Head of caudate nucleus (tissue), 42 donors: ENCODE measurements at regions of chr19 and their contacts with region 1.

Region 1: DNA sequence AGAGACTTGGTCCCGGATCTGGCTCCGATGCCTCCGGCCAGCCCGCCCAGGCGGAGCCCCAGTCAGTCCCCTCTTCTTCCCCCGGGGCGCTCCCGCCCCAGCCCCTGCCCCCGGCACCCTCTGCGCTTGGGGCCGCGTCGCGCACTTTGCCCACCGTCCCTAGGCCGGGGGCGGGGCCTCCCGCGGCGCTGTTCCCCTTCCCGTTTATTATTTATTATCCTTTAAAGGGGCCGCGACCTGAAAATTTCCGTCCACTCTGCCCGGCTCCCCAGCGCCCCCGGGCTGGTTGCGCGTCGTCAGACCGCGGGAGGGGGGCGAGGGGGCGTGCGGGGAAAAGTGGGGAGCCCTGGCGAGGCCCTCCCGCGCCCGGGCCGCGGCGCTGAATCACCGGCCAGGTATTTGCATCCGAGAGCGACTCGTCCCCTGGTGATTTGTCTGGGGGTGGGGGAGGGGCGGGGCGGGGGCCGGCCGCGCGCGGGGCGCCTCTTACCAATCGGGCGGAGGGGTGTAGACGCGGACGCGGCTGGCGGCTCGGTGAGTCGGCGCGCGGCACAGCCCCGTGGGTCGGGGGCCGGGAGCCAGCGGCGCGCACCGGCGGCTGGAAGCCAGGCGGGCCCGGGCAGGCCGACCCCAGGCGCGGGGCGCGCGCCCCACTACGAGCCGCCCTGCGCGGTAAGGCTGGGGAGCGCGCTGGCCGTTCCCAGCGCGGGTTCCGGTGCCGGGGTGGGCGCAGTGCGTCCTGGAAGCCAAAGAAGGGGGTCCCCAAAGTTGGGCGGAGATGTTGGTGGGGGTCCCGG is at the start of gene ARID3A:
- DNase-seq: peak; percentile 62 to 92 (median 81)

Region 2: DNA sequence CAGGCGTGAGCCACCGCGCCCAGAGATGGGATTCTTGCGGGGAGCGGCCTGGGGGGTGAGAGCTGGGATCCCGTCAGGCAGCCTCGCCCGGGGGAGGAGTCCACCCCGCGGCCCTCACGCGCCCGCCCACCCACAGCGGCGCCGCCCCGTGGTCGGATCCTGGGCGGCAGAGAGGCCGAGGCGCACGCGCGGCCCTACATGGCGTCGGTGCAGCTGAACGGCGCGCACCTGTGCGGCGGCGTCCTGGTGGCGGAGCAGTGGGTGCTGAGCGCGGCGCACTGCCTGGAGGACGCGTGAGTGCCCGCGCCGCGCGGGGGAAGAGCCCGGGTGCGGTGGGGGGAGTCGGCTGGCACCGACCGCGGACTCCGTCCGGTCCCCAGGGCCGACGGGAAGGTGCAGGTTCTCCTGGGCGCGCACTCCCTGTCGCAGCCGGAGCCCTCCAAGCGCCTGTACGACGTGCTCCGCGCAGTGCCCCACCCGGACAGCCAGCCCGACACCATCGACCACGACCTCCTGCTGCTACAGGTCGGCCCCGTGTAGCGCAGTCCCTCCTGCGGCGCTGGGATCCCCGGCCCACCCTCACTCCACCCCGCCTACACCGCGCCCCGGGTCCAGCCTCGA is 65.1 kb before region 1 on chr19:
- intact Hi-C with region 1: loop called (anchors 5 kb)
- DNase-seq: peak in 3 of 42 donors; percentile 28 to 61 (median 49)

Region 3: GRCh38 chr19:984165-984967 is 58.6 kb after region 1 on chr19 and contains the start of gene WDR18:
- intact Hi-C with region 1: loop called (anchors 1 kb)
- DNase-seq: peak; percentile 90 to 99 (median 96)